Pancreas (tissue), 10 donors: ENCODE measurements at regions of chr14 and their contacts with region 1.

Region 1: DNA sequence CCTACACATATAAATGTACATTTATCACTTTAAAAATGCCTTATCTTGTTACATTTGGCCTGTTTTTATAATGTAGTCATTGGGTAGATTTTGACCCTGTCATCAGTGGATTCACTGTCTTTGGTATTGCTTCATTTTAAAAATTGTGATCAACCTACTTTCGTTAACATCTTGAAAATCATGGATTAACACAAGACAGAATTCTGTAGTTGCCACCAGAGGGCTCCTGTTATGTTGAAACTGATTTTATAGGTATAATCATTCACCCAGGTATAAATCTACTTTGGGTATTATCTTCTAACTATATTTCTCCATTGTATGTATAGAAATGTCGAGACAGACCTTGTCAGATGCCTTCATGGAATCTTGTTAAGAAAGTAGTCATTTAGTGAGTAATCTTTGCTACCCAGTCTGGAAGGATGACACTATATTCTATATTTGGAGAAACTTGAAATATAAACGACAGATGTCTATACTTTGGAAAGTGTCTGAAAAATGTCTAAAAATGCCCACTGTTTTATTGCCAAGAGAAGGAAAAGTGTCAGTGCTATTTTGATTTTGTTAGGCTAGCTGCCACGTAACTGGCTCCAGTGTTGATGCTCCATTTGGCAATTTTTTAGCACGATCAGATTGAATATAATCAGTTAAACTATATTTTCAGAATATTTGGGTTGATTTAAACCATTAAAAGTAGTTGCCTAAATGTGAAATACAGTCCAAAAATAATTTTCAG is 129.4 kb downstream of the PELI2 start:
- DNase-seq: no peak
- ATAC-seq: no peak
- H3K4me3 ChIP-seq: no peak overlapping the region
- H3K27ac ChIP-seq: no peak overlapping the region
- H3K4me1 ChIP-seq: peaks cover 0 to 6% (median 0%) of the 10 kb centered on the region in 3 donors
- H3K27me3 ChIP-seq: no peaks in the 10 kb centered on the region
- CTCF ChIP-seq: peak in 1 of 4 donors; percentile 10

Region 2: DNA sequence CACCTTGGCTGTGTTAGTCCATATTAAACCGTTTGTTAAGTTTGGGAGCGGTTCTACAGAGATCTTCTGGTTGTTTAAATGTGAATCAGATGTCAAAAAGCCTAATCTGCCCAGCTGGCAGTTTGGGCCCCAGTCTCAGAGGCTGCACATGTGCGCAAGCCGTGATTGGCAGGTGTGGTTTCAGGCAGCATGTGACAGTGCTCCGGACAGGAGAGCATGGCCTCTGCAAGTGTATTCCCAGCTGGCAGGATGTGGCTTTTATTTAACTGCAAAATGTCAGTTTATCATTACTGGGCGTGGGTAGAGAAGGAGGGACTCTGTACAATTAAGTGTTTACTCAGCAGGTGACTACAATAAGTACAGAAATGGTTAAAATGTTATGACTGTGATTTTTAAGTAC is 51.9 kb before region 1 on chr14:
- intact Hi-C with region 1: loop called in 1 of 3 experiments (anchors 10 kb)
- DNase-seq: peak in 2 of 6 donors; percentile 21 to 41
- ATAC-seq: peak; percentile 55 to 69 (median 62)
- H3K4me3 ChIP-seq: no peak overlapping the region
- H3K27ac ChIP-seq: peak overlapping the region in 1 of 4 donors; percentile 11
- H3K4me1 ChIP-seq: peaks cover 13 to 32% (median 25%) of the 10 kb centered on the region in 3 donors
- H3K27me3 ChIP-seq: no peaks in the 10 kb centered on the region
- CTCF ChIP-seq: no peak

Region 3: DNA sequence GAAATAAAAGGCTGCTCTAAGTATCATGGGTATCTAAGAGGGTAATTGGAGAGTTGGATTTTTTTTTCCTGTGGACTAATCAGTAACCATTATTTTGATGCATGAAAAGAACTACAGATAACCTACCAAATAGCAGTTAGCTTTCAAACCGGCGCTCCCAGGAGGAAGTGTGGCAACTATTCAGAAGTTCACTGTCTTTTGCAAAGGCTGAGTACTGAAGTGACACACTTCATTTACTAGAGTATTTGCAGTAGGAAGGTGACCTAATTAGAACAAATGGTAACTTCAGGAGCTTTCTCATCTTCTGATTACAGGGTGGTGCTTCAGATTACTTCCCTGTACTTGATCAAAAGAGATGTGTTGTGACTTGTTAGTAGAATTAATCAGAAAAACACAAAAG is 41.8 kb before region 1 on chr14:
- intact Hi-C with region 1: loop called in 1 of 3 experiments (anchors 5 kb)
- DNase-seq: no peak
- ATAC-seq: peak; percentile 42 to 66 (median 58)
- H3K4me3 ChIP-seq: no peak overlapping the region
- H3K27ac ChIP-seq: peak overlapping the region in 1 of 4 donors; percentile 20
- H3K4me1 ChIP-seq: peaks cover 26 to 29% (median 27%) of the 10 kb centered on the region in 3 donors
- H3K27me3 ChIP-seq: no peaks in the 10 kb centered on the region
- CTCF ChIP-seq: no peak